ENCODE measurements at regions of chr2 and their contacts with region 1.

Region 1: DNA sequence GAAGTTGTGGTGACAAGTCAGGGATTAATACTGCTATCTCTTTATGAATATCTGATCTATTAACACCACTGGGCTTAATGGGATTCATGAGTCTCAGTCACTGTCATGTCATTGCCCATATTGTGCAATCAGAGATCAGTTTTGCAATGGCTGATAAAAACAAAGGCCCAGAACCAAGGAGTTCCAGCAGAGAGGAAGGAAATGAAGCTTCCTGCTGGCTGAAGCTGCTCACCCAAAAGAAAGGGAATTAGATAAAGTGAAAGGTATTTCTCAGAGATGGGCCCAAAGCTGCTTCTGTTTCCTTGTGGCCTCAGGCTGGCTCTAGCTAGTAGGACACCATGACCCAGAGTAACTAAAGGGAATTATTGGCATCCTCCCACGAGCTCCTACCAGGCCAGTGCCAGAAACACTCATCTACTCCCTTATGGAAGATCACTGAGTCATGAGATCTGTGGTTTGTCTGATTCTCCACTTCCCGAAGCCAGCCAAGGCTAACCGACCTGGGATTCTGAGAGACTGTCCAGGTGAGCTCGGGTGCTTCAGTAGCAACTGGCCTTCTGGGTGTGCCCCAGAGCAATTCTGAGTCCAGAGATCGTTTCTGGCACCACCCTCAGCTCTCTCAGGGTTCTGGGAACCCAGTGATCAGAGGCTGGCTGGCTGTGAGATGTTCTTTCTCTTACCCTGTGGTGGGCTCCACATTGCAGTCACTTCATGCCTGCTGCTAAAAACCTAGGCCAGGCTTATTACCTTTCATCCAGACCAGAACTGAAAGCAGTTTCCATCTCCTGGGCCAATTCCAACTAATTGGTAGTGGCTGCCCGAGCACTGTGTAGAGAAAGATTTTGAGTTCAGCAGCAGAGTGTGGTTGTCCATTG is 129.5 kb upstream of the PELI1 start:
- DNase-seq: peak; percentile 87 to 96 (median 94)
- H3K4me3 ChIP-seq: peak overlapping the region; percentile 52 to 87 (median 53)
- H3K4me3 Mint-ChIP-seq: peak overlapping the region; percentile 79 to 90
- H3K27ac ChIP-seq: peak overlapping the region; percentile 87 to 96
- H3K27ac Mint-ChIP-seq: peak overlapping the region; percentile 94 to 98 (median 96)
- H3K4me1 ChIP-seq: peaks cover 64 to 70% of the 10 kb centered on the region in 2 donors
- H3K4me1 Mint-ChIP-seq: peaks cover 68% of the 10 kb centered on the region
- H3K27me3 ChIP-seq: no peaks in the 10 kb centered on the region
- H3K27me3 Mint-ChIP-seq: peaks cover 0 to 2% (median 0%) of the 10 kb centered on the region in 3 donors
- CTCF ChIP-seq: no peak

Region 2: GRCh38 chr2:64133828-64134227 is 139.9 kb before region 1 on chr2:
- intact Hi-C with region 1: loop called in 1 of 2 experiments (anchors 10 kb)
- DNase-seq: peak in 1 of 3 donors; percentile 8
- H3K4me3 ChIP-seq: no peak overlapping the region
- H3K4me3 Mint-ChIP-seq: no peak overlapping the region
- H3K27ac ChIP-seq: no peak overlapping the region
- H3K27ac Mint-ChIP-seq: no peak overlapping the region
- H3K4me1 ChIP-seq: peaks cover 16 to 22% of the 10 kb centered on the region in 2 donors
- H3K4me1 Mint-ChIP-seq: peaks cover 40% of the 10 kb centered on the region
- H3K27me3 ChIP-seq: no peaks in the 10 kb centered on the region
- H3K27me3 Mint-ChIP-seq: no peaks in the 10 kb centered on the region
- CTCF ChIP-seq: no peak

Region 3: GRCh38 chr2:64165706-64166105 is 108.1 kb before region 1 on chr2:
- intact Hi-C with region 1: no loop called
- DNase-seq: no peak
- H3K4me3 ChIP-seq: no peak overlapping the region
- H3K4me3 Mint-ChIP-seq: no peak overlapping the region
- H3K27ac ChIP-seq: no peak overlapping the region
- H3K27ac Mint-ChIP-seq: no peak overlapping the region
- H3K4me1 ChIP-seq: peaks cover 5 to 9% of the 10 kb centered on the region in 2 donors
- H3K4me1 Mint-ChIP-seq: peaks cover 7% of the 10 kb centered on the region
- H3K27me3 ChIP-seq: no peaks in the 10 kb centered on the region
- H3K27me3 Mint-ChIP-seq: no peaks in the 10 kb centered on the region
- CTCF ChIP-seq: no peak

Region 4: DNA sequence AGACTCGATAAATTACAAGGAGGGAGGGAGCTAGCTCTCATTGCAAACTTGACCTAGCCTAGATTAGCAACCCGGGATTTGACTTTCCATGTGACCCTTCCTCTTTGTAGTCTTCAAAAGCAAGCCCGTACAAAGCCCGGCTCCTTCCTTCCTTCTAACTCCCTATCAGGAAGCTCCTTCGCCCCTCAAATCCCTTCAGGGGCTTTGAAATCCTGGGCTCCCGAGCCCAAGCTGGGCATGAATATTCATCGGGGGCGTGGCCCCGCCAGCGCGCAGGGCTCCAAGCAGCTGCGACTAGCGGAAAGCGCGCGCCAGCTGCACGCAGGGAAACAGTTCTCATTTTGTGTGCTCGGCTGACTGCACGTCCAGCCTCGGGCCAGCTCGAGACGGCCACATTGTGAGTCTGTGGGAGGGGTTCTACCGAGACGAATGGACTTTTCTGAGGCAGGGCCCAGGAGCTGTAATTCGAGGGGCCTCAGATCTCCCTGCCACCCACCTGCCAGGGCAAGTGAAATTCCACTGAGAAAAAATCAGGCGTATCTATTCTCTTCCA is 45.6 kb before region 1 on chr2:
- intact Hi-C with region 1: loop called in 1 of 2 experiments (anchors 5 kb)
- DNase-seq: peak; percentile 64 to 74 (median 74)
- H3K4me3 ChIP-seq: peak overlapping the region; percentile 46 to 80 (median 75)
- H3K4me3 Mint-ChIP-seq: peak overlapping the region; percentile 90 to 98
- H3K27ac ChIP-seq: peak overlapping the region; percentile 71 to 87
- H3K27ac Mint-ChIP-seq: peak overlapping the region; percentile 93 to 99 (median 97)
- H3K4me1 ChIP-seq: peaks cover 24 to 36% of the 10 kb centered on the region in 2 donors
- H3K4me1 Mint-ChIP-seq: peaks cover 39% of the 10 kb centered on the region
- H3K27me3 ChIP-seq: no peaks in the 10 kb centered on the region
- H3K27me3 Mint-ChIP-seq: peaks cover 0 to 2% (median 0%) of the 10 kb centered on the region in 3 donors
- CTCF ChIP-seq: no peak

Measured in CD14-positive monocyte (primary cell).